ENCODE measurements at regions of chr9 and their contacts with region 1.

Region 1: GRCh38 chr9:128117613-128118471 is 9.7 kb downstream of the PTGES2 start:
- DNase-seq: peak; percentile 91
- H3K4me3 ChIP-seq: peak overlapping the region in 1 of 2 experiments; percentile 42; a peak in 1 of 4 replicates
- H3K27ac ChIP-seq: no peak overlapping the region
- H3K4me1 ChIP-seq: peaks cover 4 to 7% of the 10 kb centered on the region in 2 experiments; a peak in 1 of 4 replicates
- H3K27me3 ChIP-seq: no peaks in the 10 kb centered on the region
- CTCF ChIP-seq: peak; percentile 100
- EP300 ChIP-seq: no peak
- RAD21 ChIP-seq: peak; percentile 92

Region 2: GRCh38 chr9:127943731-127944144 is 174.1 kb before region 1 on chr9:
- CTCF ChIA-PET with region 1: interaction called, 55 read pairs
- POLR2A ChIA-PET with region 1: no interaction called
- DNase-seq: peak; percentile 92
- H3K4me3 ChIP-seq: peak overlapping the region in 1 of 2 experiments; percentile 16; a peak in 1 of 4 replicates
- H3K27ac ChIP-seq: peak overlapping the region in 1 of 2 experiments; percentile 62; a peak in 1 of 4 replicates
- H3K4me1 ChIP-seq: peaks cover 0 to 50% of the 10 kb centered on the region in 2 experiments; a peak in 1 of 4 replicates
- H3K27me3 ChIP-seq: no peaks in the 10 kb centered on the region
- CTCF ChIP-seq: peak; percentile 90
- EP300 ChIP-seq: no peak
- RAD21 ChIP-seq: peak; percentile 91

Region 3: GRCh38 chr9:128045831-128046230 is 72.0 kb before region 1 on chr9:
- CTCF ChIA-PET with region 1: interaction called, 16 read pairs
- POLR2A ChIA-PET with region 1: no interaction called
- DNase-seq: peak; percentile 39
- H3K4me3 ChIP-seq: no peak overlapping the region
- H3K27ac ChIP-seq: peak overlapping the region; percentile 28 to 79; a peak in 3 of 4 replicates
- H3K4me1 ChIP-seq: peaks cover 5 to 19% of the 10 kb centered on the region in 2 experiments; a peak in 3 of 4 replicates
- H3K27me3 ChIP-seq: no peaks in the 10 kb centered on the region
- CTCF ChIP-seq: no peak
- EP300 ChIP-seq: no peak; a peak in 1 of 4 replicates
- RAD21 ChIP-seq: no peak

Region 4: GRCh38 chr9:128088253-128088945 is 29.4 kb before region 1 on chr9:
- CTCF ChIA-PET with region 1: interaction called, 246 read pairs
- POLR2A ChIA-PET with region 1: interaction called, 3 read pairs
- DNase-seq: no peak
- H3K4me3 ChIP-seq: no peak overlapping the region
- H3K27ac ChIP-seq: no peak overlapping the region
- H3K4me1 ChIP-seq: peaks cover 22 to 27% of the 10 kb centered on the region in 2 experiments
- H3K27me3 ChIP-seq: no peaks in the 10 kb centered on the region
- CTCF ChIP-seq: no peak
- EP300 ChIP-seq: no peak
- RAD21 ChIP-seq: no peak

Region 5: GRCh38 chr9:128142061-128142460 is 24.2 kb after region 1 on chr9:
- CTCF ChIA-PET with region 1: interaction called, 10 read pairs
- POLR2A ChIA-PET with region 1: no interaction called
- DNase-seq: no peak
- H3K4me3 ChIP-seq: no peak overlapping the region
- H3K27ac ChIP-seq: no peak overlapping the region
- H3K4me1 ChIP-seq: no peaks in the 10 kb centered on the region
- H3K27me3 ChIP-seq: no peaks in the 10 kb centered on the region
- CTCF ChIP-seq: no peak
- EP300 ChIP-seq: no peak
- RAD21 ChIP-seq: no peak

Region 6: DNA sequence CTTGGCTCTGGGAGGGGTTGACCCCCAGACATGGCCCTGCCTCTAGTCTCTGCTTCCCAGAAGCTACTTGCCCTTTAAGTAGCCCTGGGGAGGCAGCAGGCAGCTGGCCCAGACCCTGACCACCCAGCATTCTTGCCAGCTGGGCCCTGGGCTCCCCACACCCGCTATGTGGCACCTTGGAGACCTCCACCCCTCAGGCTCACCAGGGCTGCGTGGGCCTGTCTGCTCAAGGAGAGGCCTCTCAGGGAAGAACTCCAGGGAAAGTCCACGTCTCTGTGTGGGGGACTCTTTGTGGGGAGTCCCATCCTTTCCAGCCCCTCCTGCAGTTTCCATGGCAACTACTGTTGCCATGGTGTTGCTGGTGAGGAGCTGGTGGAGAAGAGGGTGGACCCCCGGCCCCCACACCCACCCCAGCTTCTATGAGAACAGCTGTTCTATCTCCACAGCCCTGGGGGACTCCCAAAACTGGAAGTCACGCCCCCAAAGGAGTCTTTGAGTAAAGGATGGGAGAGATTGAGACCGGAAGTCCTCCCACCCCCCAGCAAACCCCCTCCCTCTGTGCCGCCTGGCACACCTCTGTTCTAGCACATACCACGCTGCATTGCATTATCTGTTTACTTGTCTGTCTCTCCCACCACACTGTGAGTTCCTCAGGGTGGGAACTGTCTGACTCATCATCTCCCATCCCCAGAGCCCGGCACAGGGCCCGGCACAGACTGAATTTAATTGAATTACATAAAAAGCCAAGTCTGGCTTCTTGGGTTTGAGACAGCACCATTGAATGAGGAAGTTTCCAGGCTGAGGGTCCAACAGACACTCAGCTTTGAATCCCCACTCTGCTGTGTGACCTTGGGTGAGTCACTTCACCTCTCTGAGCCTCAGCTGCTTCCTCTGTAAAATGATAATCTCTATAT is 97.9 kb after region 1 on chr9:
- CTCF ChIA-PET with region 1: no interaction called
- POLR2A ChIA-PET with region 1: no interaction called
- DNase-seq: peak; percentile 60
- H3K4me3 ChIP-seq: no peak overlapping the region
- H3K27ac ChIP-seq: peak overlapping the region; percentile 64 to 73; a peak in 3 of 4 replicates
- H3K4me1 ChIP-seq: peaks cover 18 to 24% of the 10 kb centered on the region in 2 experiments; a peak in 3 of 4 replicates
- H3K27me3 ChIP-seq: no peaks in the 10 kb centered on the region
- CTCF ChIP-seq: no peak
- EP300 ChIP-seq: no peak; a peak in 1 of 4 replicates
- RAD21 ChIP-seq: no peak

Measured in SK-N-SH (cell line).